Right cardiac atrium (tissue), 5 donors: ENCODE measurements at regions of chr12 and their contacts with region 1.

Region 1: DNA sequence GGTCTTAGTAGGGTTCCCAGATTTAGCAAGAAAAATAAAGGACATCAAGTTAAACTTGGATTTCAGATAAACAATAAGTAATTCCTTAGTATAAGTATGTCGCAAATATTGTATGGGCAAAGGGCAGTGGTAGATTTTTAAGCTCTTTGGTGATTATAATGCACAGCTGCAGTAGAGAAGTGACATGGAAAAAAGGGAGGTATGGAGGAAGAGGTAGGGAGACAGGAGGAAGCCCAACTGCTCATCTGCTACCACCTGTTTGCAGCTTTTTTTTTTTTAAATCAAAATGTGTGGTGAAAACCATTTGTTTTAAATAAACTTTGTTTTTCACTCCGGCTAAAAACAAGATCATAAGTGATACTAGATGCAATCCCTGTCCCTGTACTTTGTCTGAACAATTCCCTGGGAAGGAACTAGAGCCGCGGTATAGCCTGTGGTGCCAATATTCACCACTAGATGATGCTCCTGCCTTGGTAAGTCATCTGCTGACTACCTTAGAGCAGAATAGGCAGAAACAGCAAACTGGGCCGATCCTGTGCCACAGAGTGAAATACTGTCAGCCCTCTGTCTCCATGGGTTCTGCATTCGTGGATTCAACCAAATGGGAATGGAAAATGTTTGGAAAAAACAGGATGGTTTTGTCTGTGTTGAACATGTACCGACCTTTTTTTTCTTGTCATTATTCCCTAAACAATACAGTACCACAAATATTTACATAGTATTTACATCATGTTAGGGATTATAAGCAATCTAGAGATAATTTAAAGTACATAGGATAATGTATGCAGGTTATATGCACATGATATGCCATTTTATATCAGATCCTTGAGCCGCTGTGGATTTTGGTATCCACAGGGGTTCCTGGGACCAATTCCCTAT is 62.4 kb upstream of the PLBD1 start:
- DNase-seq: peak; percentile 47 to 83 (median 52)
- ATAC-seq: peak; percentile 96 to 97
- H3K4me3 ChIP-seq: no peak overlapping the region
- H3K27ac ChIP-seq: no peak overlapping the region
- H3K4me1 ChIP-seq: no peaks in the 10 kb centered on the region
- H3K27me3 ChIP-seq: no peaks in the 10 kb centered on the region

Region 2: DNA sequence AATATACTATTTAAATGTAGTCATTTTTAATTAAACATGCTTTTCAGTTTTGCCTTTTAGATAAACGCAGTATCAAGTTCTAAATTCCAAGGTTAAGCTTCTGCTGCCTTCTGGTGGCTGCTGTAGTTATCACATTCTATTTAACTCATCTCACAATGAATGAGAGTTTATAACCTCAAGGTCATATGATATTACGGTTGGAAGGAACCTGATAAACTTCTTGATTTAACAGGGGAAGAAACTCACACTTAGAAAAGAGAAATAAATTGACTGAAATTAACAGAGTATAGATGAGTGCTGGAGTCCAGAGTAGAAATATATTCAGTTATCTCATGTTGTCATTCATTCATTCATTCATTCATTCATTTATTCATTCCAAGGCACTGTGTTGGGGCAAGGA is 34.4 kb after region 1 on chr12:
- intact Hi-C with region 1: loop called in 2 of 4 experiments (anchors 2 to 5 kb)
- DNase-seq: no peak
- ATAC-seq: peak; percentile 51 to 62
- H3K4me3 ChIP-seq: no peak overlapping the region
- H3K27ac ChIP-seq: no peak overlapping the region
- H3K4me1 ChIP-seq: no peaks in the 10 kb centered on the region
- H3K27me3 ChIP-seq: no peaks in the 10 kb centered on the region

Region 3: DNA sequence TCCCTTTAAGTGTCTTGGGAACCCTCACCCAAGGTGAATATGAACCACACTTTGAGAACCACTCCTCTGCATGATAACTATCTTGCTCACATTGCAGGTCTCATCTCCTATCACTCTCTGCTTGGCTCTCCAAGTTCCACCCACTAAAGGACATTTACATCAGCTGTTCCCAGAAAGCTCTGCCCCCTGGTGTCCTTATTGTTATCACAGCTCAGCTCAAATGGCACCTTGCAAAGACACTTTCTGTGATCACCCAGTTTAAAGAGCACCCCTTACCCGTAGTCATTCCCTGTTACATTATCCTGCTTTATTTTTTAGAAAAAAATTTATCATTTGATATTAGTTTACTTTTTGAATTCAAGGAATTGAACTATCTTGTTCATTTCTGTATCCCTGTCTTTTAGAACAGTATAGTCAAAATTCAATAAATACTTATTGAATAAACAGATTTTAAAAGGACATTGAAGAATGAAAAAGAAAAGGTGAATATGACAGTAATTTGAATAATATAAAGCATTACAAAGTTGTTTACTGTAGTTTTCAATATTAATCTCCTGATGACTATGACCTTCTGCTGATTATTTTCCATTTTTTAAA is 86.9 kb after region 1 on chr12:
- intact Hi-C with region 1: loop called in 1 of 4 experiments (anchors 10 kb)
- DNase-seq: no peak
- ATAC-seq: peak in 1 of 2 donors; percentile 38
- H3K4me3 ChIP-seq: no peak overlapping the region
- H3K27ac ChIP-seq: no peak overlapping the region
- H3K4me1 ChIP-seq: no peaks in the 10 kb centered on the region
- H3K27me3 ChIP-seq: no peaks in the 10 kb centered on the region

Region 4: DNA sequence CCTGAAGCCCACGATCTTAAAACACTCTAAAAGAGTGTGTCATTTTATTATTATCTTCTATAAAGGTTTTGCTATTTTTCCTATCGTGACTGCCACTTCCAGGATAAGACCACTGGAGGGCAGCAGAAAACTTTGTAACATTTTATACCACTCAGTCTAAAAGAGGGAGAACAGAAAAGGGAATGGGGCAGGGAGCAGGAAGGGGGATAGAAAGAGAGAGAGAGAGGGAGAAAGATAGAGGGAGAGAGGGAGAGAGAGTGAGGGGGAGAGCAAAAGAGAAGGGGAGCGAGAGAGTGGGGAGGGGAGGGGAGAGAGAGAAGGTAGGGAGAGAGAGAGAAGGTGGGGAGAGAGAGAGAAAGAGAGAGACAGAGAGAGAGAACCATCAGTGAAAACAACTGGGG is 215.3 kb after region 1 on chr12:
- intact Hi-C with region 1: no loop called
- DNase-seq: peak in 1 of 3 donors; percentile 42
- ATAC-seq: peak; percentile 33 to 52
- H3K4me3 ChIP-seq: no peak overlapping the region
- H3K27ac ChIP-seq: no peak overlapping the region
- H3K4me1 ChIP-seq: peaks cover 13% of the 10 kb centered on the region
- H3K27me3 ChIP-seq: no peaks in the 10 kb centered on the region

Region 5: GRCh38 chr12:15364221-15365160 is 734.4 kb after region 1 on chr12:
- intact Hi-C with region 1: no loop called
- DNase-seq: no peak
- ATAC-seq: no peak
- H3K4me3 ChIP-seq: no peak overlapping the region
- H3K27ac ChIP-seq: no peak overlapping the region
- H3K4me1 ChIP-seq: no peaks in the 10 kb centered on the region
- H3K27me3 ChIP-seq: no peaks in the 10 kb centered on the region